B cell (primary cell): ENCODE measurements at regions of chr1 and their contacts with region 1.

Region 1: DNA sequence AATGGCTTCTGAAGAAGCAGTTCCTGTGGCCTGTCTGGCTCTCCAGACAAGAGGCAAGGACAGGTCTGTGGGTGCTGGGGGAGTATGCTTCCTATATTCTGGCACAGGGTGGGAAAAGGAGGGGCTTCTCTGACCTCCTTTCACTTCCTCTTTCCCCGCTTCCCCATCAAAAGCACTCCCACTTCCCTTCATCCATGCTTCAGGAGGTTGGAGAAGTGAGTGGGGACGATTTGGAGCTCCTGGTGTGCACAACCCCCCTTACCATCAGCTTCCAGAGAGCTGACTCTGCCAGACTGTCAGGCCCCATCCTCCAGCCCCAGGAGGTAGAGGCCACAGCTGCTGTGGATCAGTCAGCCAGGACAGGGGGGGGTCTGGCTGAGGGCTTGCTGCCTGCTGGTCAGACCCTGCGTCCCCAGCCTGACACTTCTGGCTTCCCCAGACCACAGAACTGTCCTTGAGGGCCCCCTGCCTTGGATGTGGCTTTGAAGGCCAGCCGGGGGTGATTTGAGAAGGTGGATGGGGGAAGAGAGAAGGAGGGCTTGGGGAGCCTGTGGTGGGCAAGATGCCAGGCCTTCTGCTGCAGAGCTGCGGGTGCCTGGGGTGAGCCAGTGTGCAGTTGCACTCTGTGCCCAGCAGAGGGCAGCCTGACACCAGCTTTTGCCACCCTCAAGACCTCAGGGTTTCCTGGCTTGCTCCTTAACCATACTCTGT is 21.5 kb upstream of the TMEM222 start:
- DNase-seq: peak; percentile 87
- ATAC-seq: peak; percentile 93
- H3K4me3 ChIP-seq: no peak overlapping the region
- H3K4me3 Mint-ChIP-seq: no peak overlapping the region
- H3K27ac ChIP-seq: no peak overlapping the region
- H3K27ac Mint-ChIP-seq: no peak overlapping the region
- H3K4me1 ChIP-seq: peaks cover 0 to 8% of the 10 kb centered on the region in 2 donors
- H3K4me1 Mint-ChIP-seq: peaks cover 3% of the 10 kb centered on the region
- H3K27me3 ChIP-seq: no peaks in the 10 kb centered on the region
- H3K27me3 Mint-ChIP-seq: no peaks in the 10 kb centered on the region
- CTCF ChIP-seq: peak; percentile 95

Region 2: GRCh38 chr1:27044613-27045151 is 255.8 kb before region 1 on chr1:
- CTCF ChIA-PET with region 1: interaction called, 40 read pairs
- POLR2A ChIA-PET with region 1: no interaction called
- intact Hi-C with region 1: no loop called
- DNase-seq: peak; percentile 88
- ATAC-seq: peak; percentile 94
- H3K4me3 ChIP-seq: peak overlapping the region in 4 of 5 experiments; percentile 6 to 51 (median 36)
- H3K4me3 Mint-ChIP-seq: peak overlapping the region; percentile 52
- H3K27ac ChIP-seq: no peak overlapping the region
- H3K27ac Mint-ChIP-seq: peak overlapping the region; percentile 6
- H3K4me1 ChIP-seq: peaks cover 6 to 15% of the 10 kb centered on the region in 2 donors
- H3K4me1 Mint-ChIP-seq: peaks cover 15% of the 10 kb centered on the region
- H3K27me3 ChIP-seq: peaks cover 0 to 5% (median 0%) of the 10 kb centered on the region in 4 experiments
- H3K27me3 Mint-ChIP-seq: peaks cover 3% of the 10 kb centered on the region
- CTCF ChIP-seq: peak; percentile 97

Region 3: DNA sequence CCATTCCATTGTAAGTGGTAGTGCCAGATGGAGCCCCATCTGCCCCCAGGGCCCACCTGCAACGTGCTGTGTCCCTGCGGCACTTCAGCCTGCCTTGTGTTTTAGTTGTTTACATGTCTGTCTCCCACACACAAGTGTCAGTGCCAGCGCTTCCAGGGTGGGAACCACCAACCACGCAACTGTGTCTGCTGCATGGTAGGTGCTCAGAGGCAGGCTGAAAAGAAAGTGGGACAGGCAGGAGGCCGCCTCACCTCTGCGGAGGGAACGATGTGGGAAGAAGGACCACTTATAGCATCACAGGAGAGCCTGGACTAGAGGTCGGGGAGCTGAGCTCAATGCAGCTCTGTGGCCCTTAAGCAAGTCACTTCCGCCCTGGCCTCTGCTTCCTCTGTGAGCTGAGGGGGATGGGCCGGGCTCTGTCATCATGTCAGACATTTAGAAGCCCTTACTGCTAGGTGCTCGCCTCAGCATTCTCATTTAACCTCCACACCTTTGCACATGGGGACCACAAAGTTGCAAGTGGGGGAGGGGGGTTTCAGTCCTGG is 163.4 kb before region 1 on chr1:
- CTCF ChIA-PET with region 1: interaction called, 10 read pairs
- POLR2A ChIA-PET with region 1: no interaction called
- intact Hi-C with region 1: no loop called
- DNase-seq: peak; percentile 64
- ATAC-seq: peak; percentile 77
- H3K4me3 ChIP-seq: peak overlapping the region in 2 of 5 experiments; percentile 2 to 9
- H3K4me3 Mint-ChIP-seq: peak overlapping the region; percentile 76
- H3K27ac ChIP-seq: peak overlapping the region; percentile 56 to 75
- H3K27ac Mint-ChIP-seq: peak overlapping the region; percentile 97
- H3K4me1 ChIP-seq: peaks cover 29 to 45% of the 10 kb centered on the region in 2 donors
- H3K4me1 Mint-ChIP-seq: peaks cover 59% of the 10 kb centered on the region
- H3K27me3 ChIP-seq: no peaks in the 10 kb centered on the region
- H3K27me3 Mint-ChIP-seq: no peaks in the 10 kb centered on the region
- CTCF ChIP-seq: no peak

Region 4: DNA sequence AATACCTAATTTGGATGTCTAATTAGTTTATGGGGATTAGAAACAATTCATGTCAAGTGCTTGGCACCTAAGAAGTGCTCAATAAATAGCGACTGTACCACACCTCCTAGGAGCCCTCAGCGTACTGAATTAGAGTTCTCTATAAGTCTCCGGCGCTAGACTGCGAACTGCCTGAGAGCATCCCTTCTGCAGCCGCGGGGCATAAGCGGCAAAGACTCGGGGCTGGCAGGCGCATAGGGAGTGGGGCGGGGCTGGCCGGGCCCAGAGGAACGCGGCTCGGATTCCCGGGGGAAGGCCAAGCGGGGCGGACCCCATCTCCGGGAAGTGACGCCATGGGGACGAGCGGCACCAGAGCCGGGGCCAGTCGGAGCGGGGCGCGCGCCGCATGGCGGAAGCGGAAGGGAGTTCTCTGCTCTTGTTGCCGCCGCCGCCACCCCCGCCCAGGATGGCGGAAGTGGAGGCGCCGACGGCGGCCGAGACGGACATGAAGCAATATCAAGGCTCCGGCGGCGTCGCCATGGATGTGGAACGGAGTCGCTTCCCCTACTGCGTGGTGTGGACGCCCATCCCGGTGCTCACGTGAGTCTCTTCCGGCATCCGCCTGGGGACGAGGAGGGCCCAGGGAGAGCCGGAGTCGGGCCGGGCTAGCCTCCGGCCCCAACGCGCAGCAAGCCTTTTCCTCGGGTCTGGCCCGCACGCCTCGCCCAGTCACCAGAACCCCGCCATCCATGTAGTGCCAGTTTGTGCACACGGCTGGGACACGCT is 21.5 kb after region 1 on chr1 and contains the start of gene TMEM222:
- CTCF ChIA-PET with region 1: interaction called, 77 read pairs
- POLR2A ChIA-PET with region 1: no interaction called
- intact Hi-C with region 1: no loop called
- DNase-seq: peak; percentile 98
- ATAC-seq: peak; percentile 96
- H3K4me3 ChIP-seq: peak within 1 kb of the TSS; percentile 80 to 100 (median 98)
- H3K4me3 Mint-ChIP-seq: peak within 1 kb of the TSS; percentile 98
- H3K27ac ChIP-seq: peak within 1 kb of the TSS; percentile 94
- H3K27ac Mint-ChIP-seq: peak within 1 kb of the TSS; percentile 97
- H3K4me1 ChIP-seq: peaks cover 17 to 25% of the 10 kb centered on the region in 2 donors
- H3K4me1 Mint-ChIP-seq: peaks cover 51% of the 10 kb centered on the region
- H3K27me3 ChIP-seq: no peaks in the 10 kb centered on the region
- H3K27me3 Mint-ChIP-seq: peaks cover 12% of the 10 kb centered on the region
- CTCF ChIP-seq: no peak
- total RNA-seq, gene TMEM222: 44.2 and 48.7 TPM in 2 replicates

Region 5: GRCh38 chr1:27357281-27358037 is 57.0 kb after region 1 on chr1:
- CTCF ChIA-PET with region 1: interaction called, 86 read pairs
- POLR2A ChIA-PET with region 1: interaction called, 4 read pairs
- intact Hi-C with region 1: no loop called
- DNase-seq: peak; percentile 90
- ATAC-seq: peak; percentile 71
- H3K4me3 ChIP-seq: peak overlapping the region; percentile 21 to 63 (median 54)
- H3K4me3 Mint-ChIP-seq: peak overlapping the region; percentile 84
- H3K27ac ChIP-seq: peak overlapping the region; percentile 19 to 34
- H3K27ac Mint-ChIP-seq: peak overlapping the region; percentile 75
- H3K4me1 ChIP-seq: peaks cover 36 to 54% of the 10 kb centered on the region in 2 donors
- H3K4me1 Mint-ChIP-seq: peaks cover 48% of the 10 kb centered on the region
- H3K27me3 ChIP-seq: no peaks in the 10 kb centered on the region
- H3K27me3 Mint-ChIP-seq: no peaks in the 10 kb centered on the region
- CTCF ChIP-seq: peak; percentile 98

Region 6: DNA sequence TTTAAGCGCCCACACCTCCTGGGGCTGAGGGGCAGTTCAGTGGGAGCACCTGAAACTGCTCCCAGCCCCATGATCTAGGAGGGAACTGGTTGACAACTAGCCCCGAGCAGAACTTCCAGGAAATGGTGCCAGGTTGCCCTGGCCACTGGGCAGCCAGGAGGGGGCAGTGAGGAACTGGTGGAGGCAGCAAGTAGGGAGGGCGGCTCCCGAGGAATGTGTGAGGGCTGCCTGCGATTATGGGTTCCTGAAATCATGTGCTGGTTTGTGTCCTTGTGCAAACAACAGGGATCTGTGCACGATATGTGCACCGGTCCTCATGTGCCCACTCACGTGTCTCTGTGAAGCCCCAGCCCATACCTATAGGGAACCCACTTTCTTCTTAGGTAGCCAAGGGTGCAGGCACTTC is 101.9 kb after region 1 on chr1:
- CTCF ChIA-PET with region 1: interaction called, 402 read pairs
- POLR2A ChIA-PET with region 1: interaction called, 3 read pairs
- intact Hi-C with region 1: no loop called
- DNase-seq: peak; percentile 54
- ATAC-seq: no peak
- H3K4me3 ChIP-seq: no peak overlapping the region
- H3K4me3 Mint-ChIP-seq: peak overlapping the region; percentile 72
- H3K27ac ChIP-seq: peak overlapping the region; percentile 49 to 79
- H3K27ac Mint-ChIP-seq: peak overlapping the region; percentile 89
- H3K4me1 ChIP-seq: peaks cover 41 to 59% of the 10 kb centered on the region in 2 donors
- H3K4me1 Mint-ChIP-seq: peaks cover 58% of the 10 kb centered on the region
- H3K27me3 ChIP-seq: no peaks in the 10 kb centered on the region
- H3K27me3 Mint-ChIP-seq: no peaks in the 10 kb centered on the region
- CTCF ChIP-seq: no peak